Activated B cell treated with CpG ODN at 0.5 μM for 24 hours (primary cell): ENCODE measurements at regions of chr7 and their contacts with region 1.

Region 1: DNA sequence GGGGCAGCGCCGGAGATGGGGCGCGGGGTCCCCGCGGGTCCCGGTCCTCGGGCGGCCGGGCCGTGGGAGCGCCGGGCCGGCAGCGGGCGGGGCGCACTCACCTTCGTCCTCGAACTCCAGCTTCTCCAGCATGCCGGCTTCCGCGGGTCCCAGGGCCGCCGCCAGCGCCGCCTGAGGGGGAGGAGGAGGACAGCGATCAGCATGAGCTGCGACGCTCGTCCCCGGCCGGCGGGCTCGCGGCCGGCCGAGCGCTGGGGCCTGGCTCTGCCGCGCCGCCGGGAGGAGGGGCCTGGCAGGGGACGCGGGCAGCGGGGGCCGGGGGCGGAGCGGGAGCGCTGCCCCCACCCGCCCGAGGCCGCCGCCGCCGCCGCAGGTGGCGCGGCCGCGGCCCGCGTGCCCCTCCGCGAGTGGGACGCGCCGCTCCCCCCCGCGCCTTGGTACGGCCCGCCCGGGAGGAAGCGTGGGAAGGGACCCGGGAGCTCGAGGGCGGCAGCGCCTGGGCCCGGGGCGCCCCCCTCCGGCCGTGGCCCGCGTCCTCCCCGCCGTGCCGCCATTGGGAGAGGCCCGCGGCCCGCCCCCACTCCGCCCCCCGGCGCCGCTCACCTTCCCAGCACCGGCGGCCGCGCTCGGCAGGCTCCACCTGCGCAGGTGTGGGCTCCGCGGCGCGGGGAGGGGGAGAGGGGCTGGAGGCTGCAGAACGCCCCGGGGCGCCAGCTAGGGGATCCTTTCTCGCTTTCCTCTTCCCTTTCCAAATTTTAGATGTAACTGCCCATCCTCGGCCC is 112.5 kb upstream of the RHEB start:
- DNase-seq: peak; percentile 93
- ATAC-seq: peak; percentile 76
- H3K4me3 Mint-ChIP-seq: peak overlapping the region; percentile 96
- H3K27ac Mint-ChIP-seq: peak overlapping the region; percentile 98
- H3K4me1 Mint-ChIP-seq: peaks cover 15% of the 10 kb centered on the region
- H3K27me3 Mint-ChIP-seq: no peaks in the 10 kb centered on the region
- CTCF ChIP-seq: no peak

Region 2: GRCh38 chr7:151351027-151351426 is 281.1 kb before region 1 on chr7:
- CTCF ChIA-PET with region 1: interaction called, 5 read pairs
- POLR2A ChIA-PET with region 1: interaction called, 5 read pairs
- intact Hi-C with region 1: loop called (anchors 2 kb)
- DNase-seq: peak; percentile 35
- ATAC-seq: peak; percentile 13
- H3K4me3 Mint-ChIP-seq: no peak overlapping the region
- H3K27ac Mint-ChIP-seq: peak overlapping the region; percentile 94
- H3K4me1 Mint-ChIP-seq: peaks cover 51% of the 10 kb centered on the region
- H3K27me3 Mint-ChIP-seq: no peaks in the 10 kb centered on the region
- CTCF ChIP-seq: no peak

Region 3: DNA sequence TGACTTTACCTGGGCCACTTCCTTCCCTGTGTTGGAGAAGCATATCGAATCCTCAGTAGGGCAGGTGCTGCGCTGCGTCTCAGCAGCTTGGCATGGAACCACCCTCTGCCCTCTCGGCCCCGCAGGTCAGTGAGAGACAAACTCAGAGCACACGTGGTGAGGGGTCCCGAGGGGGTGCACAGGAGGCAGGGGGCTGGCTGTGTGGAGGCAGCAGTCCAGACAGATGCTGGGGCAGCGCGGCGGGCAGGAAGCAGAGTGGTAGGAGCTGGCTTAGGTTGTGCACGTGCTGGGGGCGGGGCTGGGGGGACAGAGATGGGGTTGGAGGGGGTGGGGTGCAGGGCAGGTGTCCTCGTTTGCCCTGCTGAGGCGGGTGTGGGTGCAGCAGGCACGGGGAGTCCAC is 257.4 kb before region 1 on chr7:
- CTCF ChIA-PET with region 1: no interaction called
- POLR2A ChIA-PET with region 1: no interaction called
- intact Hi-C with region 1: no loop called
- DNase-seq: no peak
- ATAC-seq: no peak
- H3K4me3 Mint-ChIP-seq: no peak overlapping the region
- H3K27ac Mint-ChIP-seq: no peak overlapping the region
- H3K4me1 Mint-ChIP-seq: peaks cover 5% of the 10 kb centered on the region
- H3K27me3 Mint-ChIP-seq: no peaks in the 10 kb centered on the region
- CTCF ChIP-seq: no peak

Region 4: DNA sequence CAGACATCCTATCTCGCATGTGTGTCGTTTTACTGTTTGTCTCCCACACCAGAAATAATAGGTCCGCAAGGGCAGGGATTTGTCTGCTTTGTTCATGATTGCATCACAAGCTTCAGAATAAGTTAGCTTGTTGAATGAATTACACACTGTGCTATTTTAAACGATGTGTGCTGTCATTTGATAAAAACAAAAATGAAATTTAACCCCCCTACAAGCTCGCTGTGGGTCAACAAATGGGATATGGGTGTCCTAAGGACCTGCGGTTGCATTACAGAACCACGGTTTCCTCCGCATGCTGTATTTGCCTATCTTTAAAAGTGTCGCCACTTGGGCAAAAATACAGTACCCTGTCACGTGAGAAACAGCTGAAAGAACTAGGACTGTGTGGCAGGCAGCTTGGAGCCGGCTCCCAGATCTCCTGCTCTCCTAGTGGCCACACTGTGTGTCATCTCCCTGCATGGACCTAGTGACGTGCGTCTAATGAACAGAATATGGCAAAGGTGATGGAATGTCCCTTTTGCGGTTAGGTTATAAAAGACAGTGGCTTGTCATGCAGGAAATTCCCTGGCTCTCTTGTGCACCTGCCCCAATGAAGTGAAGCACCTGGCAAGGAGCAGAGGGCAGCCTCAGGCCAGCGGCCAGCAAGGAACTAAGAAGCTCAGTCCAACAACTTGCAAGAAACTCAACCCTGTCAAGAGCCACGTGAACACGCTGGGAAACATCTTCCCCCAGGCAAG is 159.3 kb before region 1 on chr7:
- CTCF ChIA-PET with region 1: no interaction called
- POLR2A ChIA-PET with region 1: no interaction called
- intact Hi-C with region 1: loop called (anchors 5 kb)
- DNase-seq: no peak
- ATAC-seq: peak; percentile 38
- H3K4me3 Mint-ChIP-seq: peak overlapping the region; percentile 62
- H3K27ac Mint-ChIP-seq: peak overlapping the region; percentile 57
- H3K4me1 Mint-ChIP-seq: peaks cover 27% of the 10 kb centered on the region
- H3K27me3 Mint-ChIP-seq: no peaks in the 10 kb centered on the region
- CTCF ChIP-seq: no peak

Region 5: DNA sequence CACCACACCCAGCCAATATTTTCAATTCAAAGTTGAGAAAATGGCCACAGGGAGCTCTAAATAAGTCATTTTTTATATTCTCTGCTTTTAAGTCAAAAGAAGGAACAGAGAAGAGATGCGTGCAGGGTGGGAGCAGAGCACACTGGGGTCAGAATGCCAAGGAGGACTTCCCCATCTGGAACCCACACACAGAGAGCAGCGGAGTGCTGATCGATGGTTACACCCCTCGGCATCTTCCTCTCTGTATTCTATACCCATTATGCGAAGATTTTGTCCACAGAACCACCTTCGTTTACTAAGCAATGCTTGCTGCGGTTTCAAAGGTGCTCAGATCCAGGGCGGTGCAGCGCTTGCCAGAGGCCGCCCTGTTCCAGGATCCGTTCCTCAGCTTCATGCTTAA is 21.1 kb before region 1 on chr7:
- CTCF ChIA-PET with region 1: no interaction called
- POLR2A ChIA-PET with region 1: no interaction called
- intact Hi-C with region 1: no loop called
- DNase-seq: no peak
- ATAC-seq: no peak
- H3K4me3 Mint-ChIP-seq: no peak overlapping the region
- H3K27ac Mint-ChIP-seq: no peak overlapping the region
- H3K4me1 Mint-ChIP-seq: peaks cover 2% of the 10 kb centered on the region
- H3K27me3 Mint-ChIP-seq: no peaks in the 10 kb centered on the region
- CTCF ChIP-seq: no peak

Region 6: GRCh38 chr7:151687523-151688218 is 55.5 kb after region 1 on chr7:
- CTCF ChIA-PET with region 1: no interaction called
- POLR2A ChIA-PET with region 1: no interaction called
- intact Hi-C with region 1: no loop called
- DNase-seq: no peak
- ATAC-seq: no peak
- H3K4me3 Mint-ChIP-seq: no peak overlapping the region
- H3K27ac Mint-ChIP-seq: no peak overlapping the region
- H3K4me1 Mint-ChIP-seq: no peaks in the 10 kb centered on the region
- H3K27me3 Mint-ChIP-seq: no peaks in the 10 kb centered on the region
- CTCF ChIP-seq: no peak

Region 7: DNA sequence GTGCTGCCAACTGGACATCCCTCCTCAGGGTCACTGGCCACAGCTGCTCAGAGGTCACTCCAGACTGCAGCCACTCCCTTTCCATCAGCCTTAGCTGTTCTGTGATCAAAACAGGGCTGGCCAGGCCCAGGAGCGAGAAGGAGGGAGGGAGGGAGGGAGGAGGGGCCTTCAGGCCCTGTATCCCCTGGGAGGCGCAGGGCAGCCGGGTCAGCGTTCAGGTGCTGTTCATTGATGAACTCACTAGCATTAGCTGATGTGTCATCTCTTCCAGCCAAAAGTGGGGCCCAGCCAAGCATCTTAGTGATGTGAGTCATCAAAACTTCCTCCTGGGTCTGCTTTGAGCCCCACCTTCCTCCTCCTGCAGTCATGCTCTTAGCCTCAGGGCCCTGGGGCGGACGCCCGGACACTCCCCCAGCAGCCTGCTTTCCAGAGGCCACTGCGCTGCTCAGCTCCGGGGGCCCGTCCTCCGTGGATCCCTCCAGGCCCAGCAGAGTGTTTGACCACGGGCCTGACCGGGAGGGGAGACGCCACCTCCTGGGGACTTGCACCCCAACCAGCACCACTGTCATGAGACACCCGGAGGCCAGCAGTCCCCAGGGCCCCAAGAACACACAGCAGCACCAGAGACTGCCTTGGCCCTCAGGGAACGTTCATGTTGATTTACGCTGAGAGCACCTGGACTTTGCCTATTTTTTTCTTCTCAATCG is 95.6 kb after region 1 on chr7:
- CTCF ChIA-PET with region 1: no interaction called
- POLR2A ChIA-PET with region 1: interaction called, 4 read pairs
- intact Hi-C with region 1: loop called (anchors 2 kb)
- DNase-seq: peak; percentile 44
- ATAC-seq: peak; percentile 83
- H3K4me3 Mint-ChIP-seq: peak overlapping the region; percentile 11
- H3K27ac Mint-ChIP-seq: no peak overlapping the region
- H3K4me1 Mint-ChIP-seq: peaks cover 37% of the 10 kb centered on the region
- H3K27me3 Mint-ChIP-seq: no peaks in the 10 kb centered on the region
- CTCF ChIP-seq: no peak

Region 8: GRCh38 chr7:151936207-151936606 is 304.0 kb after region 1 on chr7:
- CTCF ChIA-PET with region 1: no interaction called
- POLR2A ChIA-PET with region 1: no interaction called
- intact Hi-C with region 1: loop called (anchors 5 kb)
- DNase-seq: no peak
- ATAC-seq: peak; percentile 78
- H3K4me3 Mint-ChIP-seq: peak overlapping the region; percentile 77
- H3K27ac Mint-ChIP-seq: peak overlapping the region; percentile 94
- H3K4me1 Mint-ChIP-seq: peaks cover 45% of the 10 kb centered on the region
- H3K27me3 Mint-ChIP-seq: peaks cover 3% of the 10 kb centered on the region
- CTCF ChIP-seq: no peak

Region 9: GRCh38 chr7:152675759-152676636 is 1043.8 kb after region 1 on chr7 and contains the start of gene XRCC2:
- CTCF ChIA-PET with region 1: no interaction called
- POLR2A ChIA-PET with region 1: no interaction called
- intact Hi-C with region 1: loop called (anchors 10 kb)
- DNase-seq: peak; percentile 99
- ATAC-seq: peak; percentile 94
- H3K4me3 Mint-ChIP-seq: peak within 1 kb of the TSS; percentile 94
- H3K27ac Mint-ChIP-seq: peak within 1 kb of the TSS; percentile 93
- H3K4me1 Mint-ChIP-seq: peaks cover 11% of the 10 kb centered on the region
- H3K27me3 Mint-ChIP-seq: no peaks in the 10 kb centered on the region
- CTCF ChIP-seq: no peak
- total RNA-seq, gene XRCC2: 1.7 and 2.3 TPM in 2 replicates